PC-3 (cell line): ENCODE measurements at regions of chr3 and their contacts with region 1.

Region 1: DNA sequence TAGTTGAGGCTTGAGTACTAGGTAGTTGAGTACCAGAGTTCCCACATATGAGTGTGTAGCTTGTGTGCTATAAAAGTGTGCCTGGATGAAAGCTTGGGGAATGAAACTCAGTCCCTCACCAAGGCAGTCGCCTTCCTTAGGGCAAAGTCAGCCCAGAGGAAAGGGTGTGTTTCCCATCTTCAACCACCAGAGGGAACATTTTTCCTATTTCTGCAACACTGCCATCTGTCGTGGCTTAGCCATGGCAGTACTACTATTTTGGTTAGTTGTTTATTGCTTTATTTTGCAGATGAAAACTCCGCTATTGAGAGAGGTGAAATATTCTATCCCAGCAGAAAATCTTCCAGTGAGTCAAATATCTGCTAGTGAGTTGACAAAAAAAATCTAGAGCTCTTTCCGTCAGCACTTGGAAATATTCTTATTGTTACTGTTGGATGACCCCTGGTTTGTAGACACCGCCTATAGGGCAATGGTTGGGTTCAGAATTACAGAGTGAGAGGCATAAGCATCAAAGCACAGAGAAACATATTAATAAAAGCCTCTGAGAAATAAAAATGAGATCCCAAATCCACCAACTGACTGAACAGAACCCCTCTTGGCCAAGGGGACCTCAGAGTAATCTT is 239.9 kb downstream of the CPNE4 start:
- DNase-seq: peak; percentile 76
- ATAC-seq: peak; percentile 81
- H3K4me3 ChIP-seq: no peak overlapping the region
- H3K27ac ChIP-seq: no peak overlapping the region
- H3K4me1 ChIP-seq: peaks cover 11% of the 10 kb centered on the region; the same call in 1 of the 2 replicates
- H3K27me3 ChIP-seq: no peaks in the 10 kb centered on the region
- CTCF ChIP-seq: peak; percentile 80

Region 2: DNA sequence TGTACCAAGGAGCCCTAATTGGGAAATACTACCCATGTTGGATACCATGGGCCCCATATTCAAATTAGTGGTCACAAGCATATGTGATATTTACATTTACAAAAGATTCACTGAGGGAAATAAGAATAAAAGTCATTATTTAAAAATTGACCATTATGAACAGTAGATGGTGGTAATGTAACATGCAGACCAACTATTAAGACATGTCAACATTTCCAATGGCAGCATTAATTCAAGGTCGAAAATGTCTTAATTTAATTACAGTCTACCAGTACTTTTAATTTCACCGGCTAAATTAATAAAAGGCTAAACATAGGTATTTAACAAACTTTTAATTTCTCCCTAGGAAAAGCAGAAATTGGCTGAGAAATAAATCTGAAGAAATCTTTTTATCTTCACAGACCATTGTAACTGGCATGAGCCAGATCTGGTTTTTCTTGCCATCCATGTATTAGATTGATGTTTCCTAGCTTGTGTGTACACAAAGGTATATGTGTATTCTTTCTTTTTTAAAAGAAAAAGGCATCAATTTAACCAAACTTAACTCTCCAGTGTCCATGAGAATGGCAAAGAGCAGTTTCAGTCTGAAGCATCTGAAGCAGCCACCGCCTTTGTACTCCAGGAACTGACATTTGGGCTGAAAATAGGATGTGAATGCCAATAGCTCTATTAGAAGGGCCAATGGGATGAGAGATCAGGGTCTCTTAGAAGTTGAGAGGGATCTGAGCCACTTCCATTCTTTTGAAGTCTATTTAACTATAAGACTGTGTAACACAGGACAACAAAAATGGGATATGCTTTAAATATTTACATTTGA is 741.6 kb before region 1 on chr3:
- CTCF ChIA-PET with region 1: no interaction called
- POLR2A ChIA-PET with region 1: no interaction called
- intact Hi-C with region 1: loop called (anchors 10 kb)
- DNase-seq: peak; percentile 28
- ATAC-seq: 0 out of 2 replicates have a peak, but pooled peaks have one; percentile 27
- H3K4me3 ChIP-seq: no peak overlapping the region
- H3K27ac ChIP-seq: no peak overlapping the region
- H3K4me1 ChIP-seq: no peaks in the 10 kb centered on the region
- H3K27me3 ChIP-seq: no peaks in the 10 kb centered on the region
- CTCF ChIP-seq: peak; percentile 56

Region 3: GRCh38 chr3:131503246-131503635 is 291.6 kb before region 1 on chr3:
- CTCF ChIA-PET with region 1: no interaction called
- POLR2A ChIA-PET with region 1: no interaction called
- intact Hi-C with region 1: no loop called
- DNase-seq: no peak
- ATAC-seq: peak; percentile 10
- H3K4me3 ChIP-seq: peak overlapping the region; percentile 95
- H3K27ac ChIP-seq: no peak overlapping the region
- H3K4me1 ChIP-seq: peaks cover 15% of the 10 kb centered on the region
- H3K27me3 ChIP-seq: no peaks in the 10 kb centered on the region
- CTCF ChIP-seq: no peak

Region 4: GRCh38 chr3:131526801-131527347 is 268.0 kb before region 1 on chr3:
- CTCF ChIA-PET with region 1: no interaction called
- POLR2A ChIA-PET with region 1: no interaction called
- intact Hi-C with region 1: loop called (anchors 10 kb)
- DNase-seq: peak; percentile 53
- ATAC-seq: peak; percentile 99
- H3K4me3 ChIP-seq: peak overlapping the region; percentile 53; the same call in 1 of the 2 replicates
- H3K27ac ChIP-seq: no peak overlapping the region
- H3K4me1 ChIP-seq: no peaks in the 10 kb centered on the region
- H3K27me3 ChIP-seq: no peaks in the 10 kb centered on the region
- CTCF ChIP-seq: peak; percentile 52

Region 5: GRCh38 chr3:131782751-131783150 is 12.1 kb before region 1 on chr3:
- CTCF ChIA-PET with region 1: no interaction called
- POLR2A ChIA-PET with region 1: no interaction called
- intact Hi-C with region 1: no loop called
- DNase-seq: no peak
- ATAC-seq: no peak
- H3K4me3 ChIP-seq: no peak overlapping the region
- H3K27ac ChIP-seq: no peak overlapping the region
- H3K4me1 ChIP-seq: no peaks in the 10 kb centered on the region
- H3K27me3 ChIP-seq: no peaks in the 10 kb centered on the region
- CTCF ChIP-seq: no peak

Region 6: GRCh38 chr3:131880948-131881347 is 86.1 kb after region 1 on chr3:
- CTCF ChIA-PET with region 1: no interaction called
- POLR2A ChIA-PET with region 1: no interaction called
- intact Hi-C with region 1: no loop called
- DNase-seq: no peak
- ATAC-seq: no peak
- H3K4me3 ChIP-seq: no peak overlapping the region
- H3K27ac ChIP-seq: no peak overlapping the region
- H3K4me1 ChIP-seq: peaks cover 20% of the 10 kb centered on the region
- H3K27me3 ChIP-seq: no peaks in the 10 kb centered on the region
- CTCF ChIP-seq: no peak

Region 7: DNA sequence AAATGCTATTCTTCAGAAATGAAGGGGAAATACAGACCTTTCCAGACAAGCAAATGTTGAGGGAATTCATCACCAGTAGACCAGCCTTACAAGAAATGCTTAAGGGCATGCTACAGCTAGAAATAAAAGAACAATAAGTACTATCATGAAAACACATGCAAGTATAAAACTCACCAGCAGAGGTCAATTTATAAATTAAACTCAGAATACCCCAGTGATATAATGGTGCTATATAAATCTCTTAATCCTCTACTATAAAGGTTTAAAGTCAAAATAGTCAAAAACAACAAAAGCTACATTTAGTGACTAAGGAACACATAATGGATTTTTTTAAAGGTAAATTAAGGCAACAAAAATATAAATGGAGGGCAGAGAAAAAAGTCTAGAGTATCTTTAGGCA is 97.5 kb after region 1 on chr3:
- CTCF ChIA-PET with region 1: no interaction called
- POLR2A ChIA-PET with region 1: no interaction called
- intact Hi-C with region 1: no loop called
- DNase-seq: no peak
- ATAC-seq: no peak
- H3K4me3 ChIP-seq: no peak overlapping the region
- H3K27ac ChIP-seq: no peak overlapping the region
- H3K4me1 ChIP-seq: peaks cover 11% of the 10 kb centered on the region
- H3K27me3 ChIP-seq: no peaks in the 10 kb centered on the region
- CTCF ChIP-seq: 0 out of 2 replicates have a peak, but pooled peaks have one; percentile 31

Region 8: DNA sequence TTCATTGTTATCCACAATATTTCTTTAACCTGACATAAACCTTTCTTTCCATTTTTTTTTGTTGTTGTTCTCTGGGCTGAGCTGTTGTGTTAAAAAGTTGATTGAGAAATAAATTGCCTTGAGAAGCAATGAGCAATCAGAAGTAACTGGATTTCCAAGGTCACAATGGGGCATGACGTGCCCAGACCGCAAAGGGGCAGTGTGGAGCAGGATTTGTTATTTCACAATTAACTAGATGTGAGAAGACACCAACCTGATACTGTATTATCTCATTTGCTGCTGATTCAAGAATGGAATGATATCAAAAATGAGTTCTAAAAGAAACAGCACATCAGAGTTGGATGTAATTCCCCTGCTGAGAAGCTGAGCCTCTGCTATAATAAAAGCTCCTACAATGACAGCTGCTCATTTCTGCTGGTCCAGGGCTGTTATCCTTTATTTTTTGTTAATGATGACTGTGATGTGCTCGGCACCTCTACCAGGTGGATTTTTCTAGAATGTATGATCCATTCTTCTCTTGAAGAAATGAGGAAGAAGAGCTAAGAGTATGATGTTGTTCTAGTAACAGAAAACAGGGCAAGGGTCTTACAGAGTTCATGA is 211.8 kb after region 1 on chr3:
- CTCF ChIA-PET with region 1: no interaction called
- POLR2A ChIA-PET with region 1: no interaction called
- intact Hi-C with region 1: loop called (anchors 5 kb)
- DNase-seq: peak; percentile 59
- ATAC-seq: peak; percentile 50
- H3K4me3 ChIP-seq: no peak overlapping the region
- H3K27ac ChIP-seq: no peak overlapping the region
- H3K4me1 ChIP-seq: peaks cover 20% of the 10 kb centered on the region
- H3K27me3 ChIP-seq: no peaks in the 10 kb centered on the region
- CTCF ChIP-seq: peak; percentile 65

Region 9: DNA sequence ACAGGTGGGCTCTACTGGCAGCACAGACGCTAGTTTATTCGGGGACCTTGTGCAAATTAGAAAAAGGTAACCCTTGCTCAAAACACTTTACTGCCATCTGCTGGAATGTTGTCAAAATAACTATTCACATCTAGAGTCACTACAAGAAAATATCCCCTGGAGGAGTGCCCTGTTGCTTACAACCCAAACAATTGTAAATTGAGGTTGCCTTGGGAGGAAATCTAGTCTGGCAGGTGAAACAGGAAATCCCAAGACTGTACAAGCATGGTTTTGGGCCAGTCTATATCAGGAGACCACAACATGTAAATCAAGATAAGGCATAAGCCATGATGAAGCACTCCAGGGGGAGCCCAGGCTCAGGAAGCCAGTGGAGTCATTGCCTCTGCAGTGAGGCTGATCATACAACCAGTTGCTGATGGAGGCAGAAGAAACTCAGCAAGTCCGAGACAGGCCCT is 385.5 kb after region 1 on chr3:
- CTCF ChIA-PET with region 1: no interaction called
- POLR2A ChIA-PET with region 1: no interaction called
- intact Hi-C with region 1: loop called (anchors 2 kb)
- DNase-seq: peak; percentile 89
- ATAC-seq: peak; percentile 84
- H3K4me3 ChIP-seq: no peak overlapping the region
- H3K27ac ChIP-seq: no peak overlapping the region
- H3K4me1 ChIP-seq: 0 out of 2 replicates have a peak, but pooled peaks cover 5% of the 10 kb centered on the region
- H3K27me3 ChIP-seq: no peaks in the 10 kb centered on the region
- CTCF ChIP-seq: peak; percentile 72